Mucosa of descending colon (tissue), 3 donors: ENCODE measurements at regions of chr2 and their contacts with region 1.

Region 1: GRCh38 chr2:199861132-199861774 is 10.3 kb upstream of the FTCDNL1 start:
- DNase-seq: no peak
- ATAC-seq: no peak
- H3K4me3 ChIP-seq: no peak overlapping the region
- H3K4me1 ChIP-seq: no peaks in the 10 kb centered on the region
- CTCF ChIP-seq: peak; percentile 14

Region 2: DNA sequence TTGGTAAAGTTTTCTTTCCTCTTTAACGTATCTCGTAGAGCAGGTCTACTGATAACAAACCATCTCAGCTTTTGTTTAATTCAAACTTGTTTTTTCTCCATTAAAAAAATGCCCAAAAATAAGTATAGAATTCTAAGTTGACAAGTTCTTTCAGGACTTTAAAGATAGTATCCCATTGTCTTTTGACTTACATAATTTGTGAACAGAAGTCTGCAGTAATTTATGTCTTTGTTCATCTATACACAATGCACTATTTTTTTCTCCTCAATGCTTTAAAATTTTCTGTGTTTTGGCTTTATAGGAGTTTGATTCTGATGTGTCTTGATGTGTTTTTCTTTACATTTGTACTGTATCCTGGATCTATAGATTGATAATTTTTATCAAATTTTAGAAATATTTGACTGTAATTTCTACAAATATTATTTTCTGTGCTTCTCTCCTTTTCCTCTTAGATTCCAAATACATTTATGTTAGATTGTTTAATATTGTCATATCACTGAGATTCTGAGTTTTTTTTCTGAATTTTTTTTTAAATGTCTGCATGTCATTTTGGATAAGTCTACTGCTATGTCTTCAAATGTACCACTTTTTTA is 153.6 kb before region 1 on chr2:
- intact Hi-C with region 1: loop called in 1 of 2 experiments (anchors 2 kb)
- DNase-seq: no peak
- ATAC-seq: no peak
- H3K4me3 ChIP-seq: no peak overlapping the region
- H3K4me1 ChIP-seq: no peaks in the 10 kb centered on the region
- CTCF ChIP-seq: no peak

Region 3: DNA sequence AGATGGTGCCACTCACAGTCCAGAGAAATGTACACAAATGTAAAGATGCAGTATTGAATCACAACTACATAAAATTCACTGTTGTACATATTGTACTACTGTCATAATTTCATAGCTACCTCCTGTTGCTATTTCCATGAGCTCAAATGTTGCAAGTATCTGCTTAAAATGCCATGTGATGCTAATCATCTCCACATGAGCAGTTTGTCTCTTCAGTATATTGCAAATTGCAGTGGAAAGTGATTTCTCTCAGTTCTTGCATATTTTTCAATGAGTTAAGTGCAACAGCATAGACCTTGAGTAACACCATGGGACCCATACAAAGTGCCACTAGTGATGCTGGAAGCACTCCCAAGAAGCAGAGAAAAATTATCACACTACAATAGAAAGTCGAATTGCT is 146.1 kb after region 1 on chr2:
- intact Hi-C with region 1: no loop called
- DNase-seq: no peak
- ATAC-seq: no peak
- H3K4me3 ChIP-seq: no peak overlapping the region
- H3K4me1 ChIP-seq: no peaks in the 10 kb centered on the region
- CTCF ChIP-seq: no peak